ENCODE measurements at regions of chr17 and their contacts with region 1.

Region 1: GRCh38 chr17:76681222-76682137 is 29.3 kb downstream of the MXRA7 start:
- DNase-seq: peak; percentile 67 to 75 (median 73)
- H3K4me3 ChIP-seq: no peak overlapping the region
- H3K4me3 Mint-ChIP-seq: peak overlapping the region in 4 of 8 donors; percentile 1 to 37 (median 19)
- H3K27ac ChIP-seq: no peak overlapping the region
- H3K27ac Mint-ChIP-seq: peak overlapping the region in 6 of 7 donors; percentile 30 to 90 (median 74)
- H3K4me1 ChIP-seq: peaks cover 46% of the 10 kb centered on the region
- H3K4me1 Mint-ChIP-seq: peaks cover 8 to 16% (median 14%) of the 10 kb centered on the region in 4 donors
- H3K27me3 ChIP-seq: no peaks in the 10 kb centered on the region
- H3K27me3 Mint-ChIP-seq: peaks cover 0 to 3% of the 10 kb centered on the region in 2 donors

Region 2: GRCh38 chr17:76515274-76515949 is 166.1 kb before region 1 on chr17:
- CTCF ChIA-PET with region 1: interaction called, 10 read pairs
- POLR2A ChIA-PET with region 1: interaction called, 3 read pairs
- intact Hi-C with region 1: no loop called
- DNase-seq: peak; percentile 91 to 95 (median 94)
- H3K4me3 ChIP-seq: peak overlapping the region; percentile 20 to 25
- H3K4me3 Mint-ChIP-seq: peak overlapping the region; percentile 69 to 86 (median 80)
- H3K27ac ChIP-seq: peak overlapping the region; percentile 76
- H3K27ac Mint-ChIP-seq: peak overlapping the region; percentile 94 to 100 (median 99)
- H3K4me1 ChIP-seq: peaks cover 82% of the 10 kb centered on the region
- H3K4me1 Mint-ChIP-seq: peaks cover 31 to 85% (median 51%) of the 10 kb centered on the region in 4 donors
- H3K27me3 ChIP-seq: no peaks in the 10 kb centered on the region
- H3K27me3 Mint-ChIP-seq: no peaks in the 10 kb centered on the region

Region 3: DNA sequence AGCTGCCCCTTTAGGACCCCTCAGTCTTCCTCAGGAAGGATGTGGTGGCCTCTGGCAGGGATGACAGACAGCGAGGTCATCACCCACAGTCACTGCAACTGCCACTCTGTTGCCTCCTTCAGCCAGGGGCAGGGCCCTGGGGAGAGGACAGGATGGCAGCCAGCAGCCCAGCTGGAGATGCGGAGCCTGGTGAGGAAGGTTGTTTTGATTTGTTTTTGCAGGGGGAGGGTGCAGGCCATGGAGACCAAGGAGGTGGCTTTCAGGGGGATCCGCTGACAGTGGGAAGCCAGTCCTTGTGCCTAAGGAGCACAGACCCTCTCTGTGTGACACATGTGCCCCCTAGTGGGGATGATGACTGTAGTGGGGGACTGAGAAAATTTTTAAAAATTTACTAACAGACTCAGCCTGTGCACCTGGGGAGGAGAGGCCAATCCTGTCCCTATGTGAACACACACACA is 134.3 kb before region 1 on chr17:
- CTCF ChIA-PET with region 1: interaction called, 22 read pairs
- POLR2A ChIA-PET with region 1: interaction called, 3 read pairs
- intact Hi-C with region 1: no loop called
- DNase-seq: peak; percentile 37 to 62 (median 59)
- H3K4me3 ChIP-seq: no peak overlapping the region
- H3K4me3 Mint-ChIP-seq: no peak overlapping the region
- H3K27ac ChIP-seq: no peak overlapping the region
- H3K27ac Mint-ChIP-seq: peak overlapping the region in 1 of 7 donors; percentile 38
- H3K4me1 ChIP-seq: peaks cover 7% of the 10 kb centered on the region
- H3K4me1 Mint-ChIP-seq: peaks cover 0 to 2% (median 0%) of the 10 kb centered on the region in 4 donors
- H3K27me3 ChIP-seq: no peaks in the 10 kb centered on the region
- H3K27me3 Mint-ChIP-seq: peaks cover 6% of the 10 kb centered on the region in 2 donors

Region 4: DNA sequence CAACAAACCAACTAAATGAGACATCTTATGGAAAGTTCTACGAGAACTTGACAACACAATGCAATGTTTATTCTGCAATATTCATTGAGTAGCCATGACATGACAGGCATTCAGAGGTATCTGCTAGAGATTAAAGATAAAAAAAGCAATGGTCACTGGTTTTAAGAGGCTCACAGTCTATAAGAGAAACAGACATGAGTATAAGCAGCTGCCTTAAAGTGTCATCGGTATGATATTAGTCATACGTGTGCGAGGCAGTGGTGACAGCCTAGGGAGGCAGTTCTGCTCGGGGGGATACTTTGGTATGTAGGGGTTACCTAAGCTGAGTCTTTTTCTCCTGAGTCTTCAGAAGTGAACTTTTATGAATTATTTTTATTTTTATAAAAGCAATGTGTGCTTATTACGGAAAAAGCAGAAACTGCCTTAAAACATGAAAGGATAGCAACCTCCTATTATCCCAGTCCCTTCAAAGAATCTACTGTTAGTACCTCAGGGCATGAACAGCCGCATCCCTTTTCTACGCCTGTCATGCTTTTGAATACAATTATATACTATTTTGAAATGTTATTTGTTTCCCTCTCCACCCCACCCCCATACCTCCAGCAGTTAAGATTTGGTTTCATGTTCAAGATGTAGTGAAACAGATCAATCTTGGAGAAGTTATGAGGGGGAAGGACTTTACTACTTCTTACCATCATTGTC is 45.7 kb before region 1 on chr17:
- CTCF ChIA-PET with region 1: interaction called, 11 read pairs
- POLR2A ChIA-PET with region 1: no interaction called
- intact Hi-C with region 1: loop called (anchors 5 kb)
- DNase-seq: no peak
- H3K4me3 ChIP-seq: no peak overlapping the region
- H3K4me3 Mint-ChIP-seq: no peak overlapping the region
- H3K27ac ChIP-seq: no peak overlapping the region
- H3K27ac Mint-ChIP-seq: no peak overlapping the region
- H3K4me1 ChIP-seq: peaks cover 9% of the 10 kb centered on the region
- H3K4me1 Mint-ChIP-seq: peaks cover 2 to 20% (median 7%) of the 10 kb centered on the region in 4 donors
- H3K27me3 ChIP-seq: no peaks in the 10 kb centered on the region
- H3K27me3 Mint-ChIP-seq: peaks cover 0 to 1% of the 10 kb centered on the region in 2 donors

Region 5: DNA sequence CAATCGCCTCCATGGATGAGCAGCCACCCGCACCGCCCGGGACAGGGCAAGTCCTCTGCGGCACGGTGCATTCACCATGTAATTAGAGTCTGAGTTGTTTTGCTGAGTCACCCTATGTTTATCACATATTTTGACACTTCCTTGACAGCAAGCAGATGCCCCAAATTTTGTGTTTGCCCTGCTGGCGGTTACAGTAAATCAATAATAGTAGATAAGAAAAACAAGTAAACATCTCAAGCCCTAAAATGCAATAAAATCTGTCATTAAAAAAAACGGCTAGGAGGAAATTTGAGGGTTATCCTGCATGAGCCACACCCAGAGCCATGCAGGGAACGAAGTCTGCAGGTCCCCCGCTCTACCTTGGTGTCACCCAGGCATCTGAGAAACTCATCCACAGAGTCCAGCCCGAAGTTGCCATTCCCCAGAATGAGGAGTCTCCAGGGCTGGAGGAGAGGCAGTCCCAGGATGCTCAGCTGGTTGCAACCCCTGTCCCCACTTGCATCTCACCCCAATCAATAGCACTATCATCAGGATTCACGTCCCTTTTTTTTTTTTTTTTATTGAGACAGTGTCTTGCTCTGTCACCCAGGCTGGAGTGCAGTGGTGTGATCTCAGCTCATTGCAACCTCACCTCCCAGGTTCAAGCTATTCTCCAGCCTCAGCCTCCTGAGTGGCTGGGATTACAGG is 21.4 kb before region 1 on chr17:
- CTCF ChIA-PET with region 1: interaction called, 13 read pairs
- POLR2A ChIA-PET with region 1: interaction called, 6 read pairs
- intact Hi-C with region 1: no loop called
- DNase-seq: peak in 4 of 5 donors; percentile 39 to 54 (median 49)
- H3K4me3 ChIP-seq: peak overlapping the region in 1 of 2 donors; percentile 15
- H3K4me3 Mint-ChIP-seq: peak overlapping the region; percentile 63 to 88 (median 77)
- H3K27ac ChIP-seq: peak overlapping the region; percentile 35
- H3K27ac Mint-ChIP-seq: peak overlapping the region; percentile 83 to 96 (median 92)
- H3K4me1 ChIP-seq: peaks cover 46% of the 10 kb centered on the region
- H3K4me1 Mint-ChIP-seq: peaks cover 30 to 44% (median 37%) of the 10 kb centered on the region in 4 donors
- H3K27me3 ChIP-seq: no peaks in the 10 kb centered on the region
- H3K27me3 Mint-ChIP-seq: peaks cover 0 to 3% of the 10 kb centered on the region in 2 donors

Region 6: DNA sequence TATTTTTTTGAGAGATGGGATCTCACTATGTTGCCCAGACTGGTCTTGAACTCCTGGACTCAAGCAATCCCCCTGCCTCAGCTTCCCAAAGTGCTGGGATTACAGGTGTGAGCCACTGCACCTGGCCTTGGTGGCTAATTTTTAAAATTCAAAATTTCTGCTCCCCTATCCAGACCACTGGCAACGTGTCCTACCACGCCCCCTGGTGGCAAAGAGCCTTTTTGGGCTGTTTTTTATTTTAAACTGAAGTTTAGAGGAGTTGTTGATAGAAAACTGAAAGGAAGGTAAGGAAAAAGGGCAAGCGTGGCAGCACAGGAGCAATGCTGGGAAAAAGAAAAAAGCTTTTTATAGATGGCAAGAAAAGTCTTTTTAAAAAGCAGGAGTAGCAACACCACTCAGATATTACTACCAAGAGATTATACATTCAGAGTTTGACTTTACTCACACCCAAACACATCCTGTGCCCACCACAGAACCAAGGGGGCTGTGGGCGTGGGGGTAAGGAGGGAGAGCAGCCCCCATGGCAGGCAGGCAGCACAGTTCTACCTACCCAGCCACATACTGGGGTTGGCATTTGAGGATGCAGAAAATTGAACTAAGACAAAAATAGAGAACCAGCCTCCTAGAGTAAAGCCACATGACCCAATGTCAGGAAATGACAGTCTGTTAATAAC is 33.5 kb after region 1 on chr17:
- CTCF ChIA-PET with region 1: interaction called, 23 read pairs
- POLR2A ChIA-PET with region 1: interaction called, 4 read pairs
- intact Hi-C with region 1: no loop called
- DNase-seq: peak; percentile 63 to 75 (median 71)
- H3K4me3 ChIP-seq: no peak overlapping the region
- H3K4me3 Mint-ChIP-seq: peak overlapping the region in 5 of 8 donors; percentile 1 to 33 (median 14)
- H3K27ac ChIP-seq: peak overlapping the region; percentile 53
- H3K27ac Mint-ChIP-seq: peak overlapping the region; percentile 72 to 94 (median 87)
- H3K4me1 ChIP-seq: peaks cover 39% of the 10 kb centered on the region
- H3K4me1 Mint-ChIP-seq: peaks cover 24 to 46% (median 35%) of the 10 kb centered on the region in 4 donors
- H3K27me3 ChIP-seq: no peaks in the 10 kb centered on the region
- H3K27me3 Mint-ChIP-seq: no peaks in the 10 kb centered on the region

Region 7: DNA sequence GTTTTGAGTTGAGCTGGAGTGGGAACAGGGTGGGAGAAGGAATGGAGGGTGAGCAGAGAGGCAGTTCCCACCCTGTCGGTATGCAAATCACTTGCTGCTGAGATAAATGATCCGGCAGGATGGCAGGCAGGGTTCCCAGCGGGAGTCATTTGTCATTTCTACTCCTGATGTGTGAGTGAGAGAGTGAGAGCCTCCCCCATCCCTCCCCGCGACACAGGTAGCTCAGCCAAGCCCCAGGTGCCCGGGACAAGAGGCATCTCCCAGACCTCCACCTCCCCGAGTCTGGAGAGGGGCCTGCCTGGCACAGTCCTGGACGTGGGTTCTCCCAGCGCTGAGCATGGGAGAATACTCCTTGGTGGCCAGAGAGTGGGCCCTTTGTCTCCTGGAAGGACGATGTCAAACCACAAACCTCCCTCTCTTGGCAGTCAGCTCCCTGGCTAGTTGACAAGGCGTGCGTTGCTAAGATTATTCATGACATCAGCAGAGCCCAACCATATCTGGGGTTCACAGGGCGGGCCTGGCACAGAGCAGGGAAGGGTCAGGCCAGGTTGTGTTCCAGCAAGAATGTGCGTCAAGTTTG is 1243.4 kb after region 1 on chr17:
- CTCF ChIA-PET with region 1: no interaction called
- POLR2A ChIA-PET with region 1: no interaction called
- intact Hi-C with region 1: no loop called
- DNase-seq: no peak
- H3K4me3 ChIP-seq: no peak overlapping the region
- H3K4me3 Mint-ChIP-seq: peak overlapping the region in 1 of 8 donors; percentile 25
- H3K27ac ChIP-seq: no peak overlapping the region
- H3K27ac Mint-ChIP-seq: no peak overlapping the region
- H3K4me1 ChIP-seq: peaks cover 16% of the 10 kb centered on the region
- H3K4me1 Mint-ChIP-seq: peaks cover 11 to 29% (median 15%) of the 10 kb centered on the region in 4 donors
- H3K27me3 ChIP-seq: no peaks in the 10 kb centered on the region
- H3K27me3 Mint-ChIP-seq: no peaks in the 10 kb centered on the region

Measured in CD4-positive, alpha-beta memory T cell (primary cell).